ENCODE measurements at regions of chr7 and their contacts with region 1.

Region 1: DNA sequence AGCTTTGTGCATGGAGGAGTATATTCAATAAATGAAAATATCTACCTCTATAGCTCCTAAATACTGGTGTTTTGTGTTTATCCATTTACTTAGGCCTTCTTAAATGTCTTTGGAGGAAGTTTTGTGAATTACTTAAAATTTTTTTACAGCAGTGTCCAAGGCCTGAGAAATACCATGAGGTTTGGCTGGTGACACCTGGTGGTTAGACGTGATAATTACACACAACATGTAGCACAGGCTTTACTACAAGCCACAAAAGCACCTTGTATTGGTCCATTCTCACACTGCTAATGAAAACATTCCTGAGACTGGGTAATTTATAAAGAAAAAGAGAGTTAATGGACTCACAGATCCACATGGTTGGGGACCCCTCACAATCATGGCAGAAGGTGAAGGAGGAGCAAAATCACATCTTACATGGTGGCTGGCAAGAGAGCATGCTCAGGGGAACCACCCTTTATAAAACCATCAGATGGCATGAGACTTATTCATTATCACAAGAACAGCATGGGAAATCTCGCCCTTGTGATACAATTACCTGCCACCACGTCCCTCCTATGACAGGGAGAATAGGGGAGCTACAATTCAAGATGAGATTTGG is 20.6 kb downstream of the HYAL4 start:
- DNase-seq: no peak
- H3K4me3 ChIP-seq: no peak overlapping the region
- H3K27ac ChIP-seq: no peak overlapping the region
- H3K4me1 ChIP-seq: peaks cover 11% of the 10 kb centered on the region
- H3K27me3 ChIP-seq: no peaks in the 10 kb centered on the region
- CTCF ChIP-seq: peak; percentile 82

Region 2: GRCh38 chr7:123682690-123683089 is 182.9 kb before region 1 on chr7:
- intact Hi-C with region 1: loop called (anchors 5 kb)
- DNase-seq: no peak
- H3K4me3 ChIP-seq: no peak overlapping the region
- H3K27ac ChIP-seq: peak overlapping the region; percentile 64
- H3K4me1 ChIP-seq: peaks cover 51% of the 10 kb centered on the region
- H3K27me3 ChIP-seq: no peaks in the 10 kb centered on the region
- CTCF ChIP-seq: peak; percentile 69

Region 3: GRCh38 chr7:123797673-123798527 is 67.7 kb before region 1 on chr7:
- intact Hi-C with region 1: loop called (anchors 2 kb)
- DNase-seq: no peak
- H3K4me3 ChIP-seq: no peak overlapping the region
- H3K27ac ChIP-seq: no peak overlapping the region
- H3K4me1 ChIP-seq: peaks cover 6% of the 10 kb centered on the region
- H3K27me3 ChIP-seq: no peaks in the 10 kb centered on the region
- CTCF ChIP-seq: peak; percentile 68